Dendritic cell treated with granulocyte-macrophage colony-stimulating factor and Interleukin-4, amounts not matched to agents 40 ng/mL and 50 ng/mL, for 4 days (primary cell): ENCODE measurements at regions of chr17 and their contacts with region 1.

Region 1: DNA sequence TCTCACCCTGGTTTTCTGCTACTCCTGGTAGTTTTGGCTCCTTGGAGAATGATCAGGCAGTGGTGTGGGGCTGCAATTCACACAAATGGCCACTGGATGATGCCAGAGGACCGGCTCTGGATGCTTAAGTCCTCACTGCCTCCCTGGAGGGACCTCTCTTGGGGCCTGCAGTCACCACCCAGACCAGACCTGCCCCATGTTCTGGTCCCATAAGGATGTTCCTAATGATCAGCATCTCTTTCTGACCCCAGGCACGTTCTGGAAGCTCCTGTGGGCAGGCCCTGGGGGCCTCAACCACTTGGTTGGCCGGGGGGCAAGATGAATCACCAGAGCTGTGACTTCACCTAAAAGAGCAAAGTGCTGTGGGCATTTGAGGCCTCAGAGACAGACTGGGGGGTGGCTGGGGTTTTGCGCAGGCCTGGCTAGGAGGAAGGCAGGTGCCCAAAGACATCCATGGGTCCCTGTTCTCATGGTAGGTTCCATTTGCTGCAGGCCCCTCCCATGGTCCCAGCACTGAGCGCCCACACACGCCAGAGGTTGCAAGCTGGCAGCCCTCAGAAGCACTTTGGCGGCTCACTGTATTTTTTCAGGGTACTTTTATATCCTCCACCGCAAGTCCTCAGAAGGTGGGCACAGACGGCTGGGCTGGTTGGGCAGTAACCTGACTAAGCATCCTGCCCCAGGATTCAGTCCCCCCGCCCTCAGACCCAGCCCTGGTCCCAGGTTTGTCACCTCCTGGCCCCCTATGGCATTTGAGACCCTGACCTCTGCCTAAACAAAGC is 53.2 kb downstream of the NT5M start:
- H3K4me3 Mint-ChIP-seq: no peak overlapping the region
- H3K27ac Mint-ChIP-seq: no peak overlapping the region
- H3K4me1 Mint-ChIP-seq: peaks cover 6% of the 10 kb centered on the region
- H3K27me3 Mint-ChIP-seq: peaks cover 7% of the 10 kb centered on the region

Region 2: GRCh38 chr17:17416007-17416399 is 59.7 kb after region 1 on chr17:
- intact Hi-C with region 1: no loop called
- H3K4me3 Mint-ChIP-seq: no peak overlapping the region
- H3K27ac Mint-ChIP-seq: no peak overlapping the region
- H3K4me1 Mint-ChIP-seq: peaks cover 15% of the 10 kb centered on the region
- H3K27me3 Mint-ChIP-seq: peaks cover 10% of the 10 kb centered on the region

Region 3: GRCh38 chr17:17440010-17440843 is 83.9 kb after region 1 on chr17:
- intact Hi-C with region 1: loop called (anchors 5 kb)
- H3K4me3 Mint-ChIP-seq: no peak overlapping the region
- H3K27ac Mint-ChIP-seq: no peak overlapping the region
- H3K4me1 Mint-ChIP-seq: no peaks in the 10 kb centered on the region
- H3K27me3 Mint-ChIP-seq: peaks cover 1% of the 10 kb centered on the region

Region 4: DNA sequence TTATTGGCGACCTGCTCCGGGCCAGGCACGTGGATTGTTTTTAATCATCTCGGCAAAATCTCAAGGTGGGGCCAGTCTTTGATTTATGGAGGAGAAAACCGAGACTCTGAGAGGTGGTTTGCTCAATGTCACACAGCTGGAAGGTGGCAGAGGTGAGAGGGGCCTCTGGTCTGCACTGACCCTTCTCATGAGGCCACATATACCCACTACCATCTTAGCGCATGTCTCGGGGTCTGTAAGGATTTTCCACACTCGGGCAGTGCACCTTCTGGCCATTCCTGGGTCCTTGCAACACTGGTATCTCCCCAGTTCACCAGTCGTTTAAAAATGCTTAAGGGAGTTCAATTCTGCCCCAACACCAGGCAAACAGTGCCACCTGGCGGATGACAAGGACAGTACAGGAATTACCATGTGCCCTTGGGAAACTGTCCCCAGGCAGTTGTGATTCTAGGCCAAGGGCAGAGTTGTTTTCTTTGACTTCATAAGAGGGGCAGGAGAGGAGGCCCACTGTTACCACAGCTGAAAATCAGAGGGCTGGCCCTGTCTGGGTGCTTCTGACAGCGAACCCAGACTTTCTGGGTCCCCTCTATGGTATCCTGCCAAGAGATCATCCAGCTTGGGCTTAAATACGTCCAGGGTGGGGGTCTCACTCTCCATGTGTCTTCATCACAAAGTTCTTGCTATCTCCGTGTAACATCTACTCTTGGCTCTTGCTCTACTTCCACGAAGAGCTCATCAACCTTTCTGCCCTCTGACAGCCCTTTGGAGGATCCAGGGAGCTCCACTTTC is 285.5 kb after region 1 on chr17:
- intact Hi-C with region 1: loop called (anchors 1 kb)
- H3K4me3 Mint-ChIP-seq: no peak overlapping the region
- H3K27ac Mint-ChIP-seq: no peak overlapping the region
- H3K4me1 Mint-ChIP-seq: peaks cover 25% of the 10 kb centered on the region
- H3K27me3 Mint-ChIP-seq: peaks cover 7% of the 10 kb centered on the region

Region 5: DNA sequence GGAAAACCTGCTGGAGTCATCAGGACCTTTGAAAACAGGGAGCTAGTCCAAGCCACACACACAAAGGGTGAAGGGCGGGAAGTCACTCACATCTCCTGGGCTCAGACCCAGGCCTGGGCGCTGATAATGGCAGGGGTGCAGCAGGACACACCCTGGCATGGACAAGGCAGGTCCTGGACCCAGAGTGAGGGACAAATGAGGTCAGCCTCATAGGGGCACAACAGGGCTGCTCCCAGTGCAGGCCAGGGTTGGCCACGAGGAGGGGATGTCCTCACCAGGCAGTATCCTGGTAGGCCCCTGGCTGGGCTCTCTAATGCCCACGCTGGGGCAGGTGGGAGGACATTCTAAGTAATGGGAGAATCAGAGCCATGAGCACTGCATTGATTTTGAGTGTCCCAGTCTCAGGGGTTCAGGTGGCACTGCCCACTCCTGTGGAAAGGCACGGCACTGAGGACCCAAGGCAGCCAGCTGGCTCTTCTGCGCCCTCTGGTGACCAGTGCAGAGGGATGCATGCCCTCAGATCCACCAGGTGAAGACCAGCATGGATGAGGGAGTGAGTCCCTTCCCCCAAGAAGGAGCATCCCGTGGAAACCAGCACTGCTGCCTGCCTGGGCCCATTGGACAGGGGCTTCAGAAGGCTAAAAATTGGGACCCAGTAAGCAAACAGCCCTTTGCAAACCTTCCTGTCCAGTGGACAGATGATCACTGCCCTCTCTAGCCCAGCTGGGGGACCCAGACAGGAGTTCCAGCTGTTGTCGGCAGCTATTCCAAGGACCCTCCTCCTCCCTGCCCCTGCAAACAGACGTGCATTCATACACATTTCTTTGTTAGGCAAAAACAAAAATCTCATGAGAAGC is 503.8 kb after region 1 on chr17:
- intact Hi-C with region 1: loop called (anchors 5 kb)
- H3K4me3 Mint-ChIP-seq: no peak overlapping the region
- H3K27ac Mint-ChIP-seq: no peak overlapping the region
- H3K4me1 Mint-ChIP-seq: peaks cover 16% of the 10 kb centered on the region
- H3K27me3 Mint-ChIP-seq: no peaks in the 10 kb centered on the region